ENCODE measurements at regions of chr7 and their contacts with region 1.

Region 1: GRCh38 chr7:116929914-116930913 is 23.1 kb upstream of the ST7 start:
- H3K4me3 Mint-ChIP-seq: no peak overlapping the region
- H3K27ac Mint-ChIP-seq: no peak overlapping the region
- H3K4me1 Mint-ChIP-seq: peaks cover 5% of the 10 kb centered on the region
- H3K27me3 Mint-ChIP-seq: peaks cover 12% of the 10 kb centered on the region

Region 2: GRCh38 chr7:116455009-116455408 is 475.2 kb before region 1 on chr7:
- intact Hi-C with region 1: no loop called
- H3K4me3 Mint-ChIP-seq: no peak overlapping the region
- H3K27ac Mint-ChIP-seq: no peak overlapping the region
- H3K4me1 Mint-ChIP-seq: no peaks in the 10 kb centered on the region
- H3K27me3 Mint-ChIP-seq: peaks cover 3% of the 10 kb centered on the region

Region 3: DNA sequence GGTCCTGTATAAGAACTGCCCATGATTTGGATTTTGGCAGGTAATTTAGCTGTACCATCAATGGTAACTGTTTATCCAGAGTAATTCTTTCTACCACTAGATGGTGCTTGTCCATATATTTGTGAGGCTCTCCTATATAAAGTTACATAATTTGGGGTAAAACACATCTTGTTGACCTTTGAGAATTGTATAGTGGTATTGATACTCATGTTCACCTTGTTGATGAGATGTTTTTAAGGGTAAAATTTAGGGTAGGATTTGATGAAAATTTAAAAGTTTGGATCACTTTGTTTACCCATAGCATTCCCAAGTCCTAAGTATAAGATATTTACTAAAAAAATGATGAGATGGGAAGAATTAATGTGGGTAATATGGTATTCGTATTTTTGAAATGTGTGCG is 54.7 kb after region 1 on chr7:
- intact Hi-C with region 1: loop called (anchors 5 kb)
- H3K4me3 Mint-ChIP-seq: no peak overlapping the region
- H3K27ac Mint-ChIP-seq: no peak overlapping the region
- H3K4me1 Mint-ChIP-seq: peaks cover 12% of the 10 kb centered on the region
- H3K27me3 Mint-ChIP-seq: no peaks in the 10 kb centered on the region

Region 4: GRCh38 chr7:117127585-117128168 is 197.5 kb after region 1 on chr7:
- intact Hi-C with region 1: loop called (anchors 2 kb)
- H3K4me3 Mint-ChIP-seq: no peak overlapping the region
- H3K27ac Mint-ChIP-seq: no peak overlapping the region
- H3K4me1 Mint-ChIP-seq: no peaks in the 10 kb centered on the region
- H3K27me3 Mint-ChIP-seq: no peaks in the 10 kb centered on the region

Measured in dendritic cell treated with granulocyte-macrophage colony-stimulating factor and Interleukin-4, amounts not matched to agents 40 ng/mL and 50 ng/mL, for 4 days (primary cell).